Heart right ventricle (tissue), 16 donors: ENCODE measurements at regions of chr9 and their contacts with region 1.

Region 1: DNA sequence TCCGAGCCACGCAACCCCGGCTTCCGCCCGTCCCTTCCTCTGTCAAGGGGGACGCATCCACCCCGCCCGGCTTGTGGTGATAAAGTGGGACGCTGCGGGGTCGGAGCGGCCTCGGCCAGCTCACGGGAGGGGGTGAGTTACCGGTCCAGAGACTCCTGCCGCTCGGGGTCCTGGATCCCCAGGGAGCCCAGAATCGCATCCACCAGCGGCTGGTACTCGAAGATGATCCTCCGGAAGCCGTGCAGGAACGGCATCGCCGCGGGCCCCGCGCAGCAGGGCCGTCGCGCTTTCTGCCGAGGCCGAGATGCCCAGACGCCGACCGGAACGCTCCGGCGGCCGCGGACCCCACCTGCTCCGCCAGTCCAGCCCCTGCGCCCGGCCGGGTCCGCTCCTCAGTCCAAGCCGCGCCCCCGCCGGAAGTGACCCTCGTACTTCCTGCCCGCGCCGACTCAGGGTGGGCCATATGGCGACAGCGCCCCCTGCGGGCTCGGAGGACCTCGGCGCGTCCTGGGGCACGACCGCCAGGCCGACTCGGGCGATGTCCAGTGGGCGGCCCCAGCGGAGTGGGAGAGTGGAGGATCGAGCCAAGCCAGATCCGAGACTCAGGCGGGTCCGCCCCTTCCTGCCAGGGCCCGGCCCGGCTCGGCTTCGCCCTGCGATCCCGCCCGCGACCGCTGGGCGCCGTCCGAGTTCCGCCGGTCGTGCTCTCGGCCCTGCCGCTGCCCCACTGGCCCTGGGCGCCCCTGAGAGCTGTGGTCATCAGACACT is at the start of gene ASB6:
- DNase-seq: peak; percentile 98 to 99
- ATAC-seq: peak; percentile 94 to 98 (median 96)
- H3K4me3 ChIP-seq: peak within 1 kb of the TSS; percentile 76 to 100 (median 98)
- H3K27ac ChIP-seq: peak within 1 kb of the TSS; percentile 27 to 92 (median 84)
- H3K4me1 ChIP-seq: peaks cover 17 to 29% (median 24%) of the 10 kb centered on the region in 9 donors
- H3K27me3 ChIP-seq: no peaks in the 10 kb centered on the region
- CTCF ChIP-seq: peak; percentile 96 to 100 (median 99)
- total RNA-seq, gene ASB6: 6.2 to 11.8 (median 9.0) TPM

Region 2: GRCh38 chr9:129726322-129727160 is 84.6 kb after region 1 on chr9:
- intact Hi-C with region 1: loop called in 8 of 10 experiments (anchors 5 to 10 kb)
- DNase-seq: peak; percentile 78 to 79
- ATAC-seq: peak; percentile 88 to 94 (median 92)
- H3K4me3 ChIP-seq: peak overlapping the region in 5 of 10 donors; percentile 17 to 28 (median 18)
- H3K27ac ChIP-seq: peak overlapping the region in 4 of 10 donors; percentile 42 to 53 (median 48)
- H3K4me1 ChIP-seq: peaks cover 0 to 24% (median 16%) of the 10 kb centered on the region in 9 donors
- H3K27me3 ChIP-seq: peaks cover 0 to 9% (median 0%) of the 10 kb centered on the region in 7 donors
- CTCF ChIP-seq: peak; percentile 80 to 95 (median 92)

Region 3: GRCh38 chr9:129737479-129738274 is 95.7 kb after region 1 on chr9:
- intact Hi-C with region 1: loop called in 6 of 10 experiments (anchors 5 to 10 kb)
- DNase-seq: peak; percentile 85 to 87
- ATAC-seq: peak; percentile 88 to 95 (median 92)
- H3K4me3 ChIP-seq: peak overlapping the region; percentile 36 to 84 (median 65)
- H3K27ac ChIP-seq: peak overlapping the region in 9 of 10 donors; percentile 29 to 88 (median 68)
- H3K4me1 ChIP-seq: peaks cover 0 to 13% (median 5%) of the 10 kb centered on the region in 9 donors
- H3K27me3 ChIP-seq: peaks cover 0 to 14% (median 5%) of the 10 kb centered on the region in 7 donors
- CTCF ChIP-seq: peak; percentile 96 to 99 (median 97)

Region 4: GRCh38 chr9:131379056-131379455 is 1737.1 kb after region 1 on chr9:
- intact Hi-C with region 1: no loop called
- DNase-seq: no peak
- ATAC-seq: no peak
- H3K4me3 ChIP-seq: no peak overlapping the region
- H3K27ac ChIP-seq: no peak overlapping the region
- H3K4me1 ChIP-seq: peaks cover 0 to 27% (median 14%) of the 10 kb centered on the region in 9 donors
- H3K27me3 ChIP-seq: no peaks in the 10 kb centered on the region
- CTCF ChIP-seq: no peak